K562 (cell line): ENCODE measurements at regions of chr11 and their contacts with region 1.

Region 1: DNA sequence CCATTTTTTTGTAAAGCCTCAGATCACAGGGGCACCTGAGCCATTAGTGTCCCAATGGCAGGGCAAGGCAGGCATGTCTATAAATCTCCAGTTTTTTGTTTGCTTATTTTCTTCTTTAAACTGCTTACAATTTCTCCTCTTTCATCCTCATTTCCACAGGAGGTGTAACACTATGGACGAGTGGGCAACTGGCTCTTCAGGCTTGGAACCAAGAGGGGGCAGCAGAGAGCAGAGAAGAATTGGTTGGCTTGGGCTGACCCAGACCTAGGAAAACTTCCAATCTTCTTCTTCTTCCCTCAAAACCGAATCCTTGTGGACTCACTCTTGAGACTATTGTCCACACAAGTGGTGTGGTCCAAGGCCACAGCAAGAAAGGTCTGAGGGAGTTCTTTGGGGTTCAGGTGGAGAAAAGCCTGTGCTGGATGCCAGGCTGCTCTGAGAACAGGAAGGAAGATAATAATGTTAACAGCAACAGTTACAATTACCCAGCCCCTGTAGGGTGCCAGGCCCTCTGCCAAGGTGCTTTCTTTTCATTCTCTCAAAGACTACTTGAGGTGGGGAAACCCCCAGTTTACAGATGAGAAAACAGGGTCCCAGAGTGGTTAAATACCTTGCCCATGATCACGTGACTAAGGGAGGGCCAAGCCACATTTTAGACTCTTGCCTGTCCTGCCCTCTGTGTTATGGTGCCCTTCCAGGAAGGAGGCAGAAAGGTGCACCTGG is 70.7 kb upstream of the E2F8 start:
- DNase-seq: peak; percentile 62 to 68 (median 64)
- ATAC-seq: peak; percentile 98
- H3K4me3 ChIP-seq: no peak overlapping the region
- H3K27ac ChIP-seq: no peak overlapping the region
- H3K4me1 ChIP-seq: no peaks in the 10 kb centered on the region
- H3K27me3 ChIP-seq: peaks cover 9 to 35% of the 10 kb centered on the region in 2 experiments; a peak in 4 of 5 replicates
- CTCF ChIP-seq: peak; percentile 73 to 80 (median 74)
- EP300 ChIP-seq: no peak
- POLR2A ChIP-seq: no peak
- RAD21 ChIP-seq: peak; percentile 41 to 69

Region 2: DNA sequence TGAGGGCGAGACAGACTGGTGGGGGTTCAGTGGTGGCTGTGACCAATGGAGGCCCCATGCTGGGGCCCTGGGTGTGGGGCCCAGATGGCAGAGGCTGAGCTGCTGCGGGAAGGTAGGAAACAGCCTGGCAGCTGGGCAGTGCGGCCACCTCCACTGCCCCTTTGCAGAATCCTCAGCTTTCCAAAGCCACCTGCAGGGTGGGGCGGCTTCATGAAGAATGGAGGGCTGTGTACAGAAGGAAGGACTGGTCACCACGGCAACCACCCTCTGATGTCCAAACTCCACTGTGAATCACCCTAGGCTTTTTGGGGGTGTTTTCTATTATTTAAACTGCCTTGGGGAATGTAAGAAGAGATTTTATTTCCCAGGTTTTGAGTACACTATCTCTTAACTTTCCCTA is 234.9 kb after region 1 on chr11:
- CTCF ChIA-PET with region 1: no interaction called
- POLR2A ChIA-PET with region 1: interaction called, 3 read pairs
- in situ Hi-C with region 1: loop called (anchors 10 kb)
- intact Hi-C with region 1: no loop called
- DNase-seq: no peak
- ATAC-seq: no peak
- H3K4me3 ChIP-seq: no peak overlapping the region
- H3K27ac ChIP-seq: no peak overlapping the region
- H3K4me1 ChIP-seq: no peaks in the 10 kb centered on the region
- H3K27me3 ChIP-seq: peaks cover 0 to 29% of the 10 kb centered on the region in 2 experiments; a peak in 3 of 5 replicates
- CTCF ChIP-seq: no peak
- EP300 ChIP-seq: no peak
- POLR2A ChIP-seq: no peak
- RAD21 ChIP-seq: no peak

Region 3: DNA sequence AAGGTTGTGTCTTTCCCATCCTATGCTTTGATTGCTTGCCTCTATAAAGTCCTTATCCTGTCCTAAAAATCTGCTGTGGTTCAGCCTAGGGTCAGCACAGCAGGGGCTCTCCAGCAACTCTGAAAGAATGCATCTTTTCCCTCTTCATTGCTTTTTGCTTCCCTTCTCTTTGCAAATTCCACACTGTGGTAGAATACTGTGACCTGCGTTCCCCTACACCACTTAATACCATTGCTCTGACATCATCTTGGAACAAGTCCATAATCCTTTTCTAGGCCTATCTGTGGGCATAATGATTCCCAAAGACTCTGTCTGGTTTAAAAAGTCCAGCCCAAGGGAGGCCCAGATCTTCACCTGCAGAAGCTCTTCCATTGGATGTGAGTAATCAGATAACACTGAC is 578.8 kb after region 1 on chr11:
- CTCF ChIA-PET with region 1: no interaction called
- POLR2A ChIA-PET with region 1: no interaction called
- in situ Hi-C with region 1: loop called (anchors 25 kb)
- intact Hi-C with region 1: no loop called
- DNase-seq: no peak
- ATAC-seq: no peak
- H3K4me3 ChIP-seq: no peak overlapping the region
- H3K27ac ChIP-seq: no peak overlapping the region
- H3K4me1 ChIP-seq: no peaks in the 10 kb centered on the region
- H3K27me3 ChIP-seq: peaks cover 5 to 30% of the 10 kb centered on the region in 2 experiments; a peak in 2 of 5 replicates
- CTCF ChIP-seq: no peak
- EP300 ChIP-seq: no peak
- POLR2A ChIP-seq: no peak
- RAD21 ChIP-seq: no peak